Transverse colon (tissue), 4 donors: ENCODE measurements at regions of chr6 and their contacts with region 1.

Region 1: DNA sequence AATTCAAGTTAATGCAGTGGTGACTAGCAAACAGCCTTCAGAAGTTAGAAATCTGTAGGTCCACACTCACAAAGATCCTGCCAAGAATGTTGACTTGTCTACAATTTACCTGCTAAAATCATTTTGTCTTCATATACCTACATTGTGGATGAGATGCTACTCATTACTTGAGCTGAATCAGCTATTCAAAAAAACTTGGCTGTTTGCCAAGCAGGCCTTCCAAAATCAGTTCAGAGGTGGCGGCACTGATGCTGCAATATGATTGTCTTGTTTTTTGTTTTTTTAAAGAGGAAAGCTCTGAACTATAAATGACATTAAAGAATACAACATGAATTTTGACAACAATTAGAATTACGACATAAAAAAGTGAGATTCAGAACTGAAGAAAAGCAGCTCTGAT is 354.7 kb upstream of the KHDRBS2 start:
- DNase-seq: no peak
- H3K4me3 ChIP-seq: no peak overlapping the region
- H3K27ac ChIP-seq: no peak overlapping the region
- H3K4me1 ChIP-seq: no peaks in the 10 kb centered on the region
- H3K27me3 ChIP-seq: no peaks in the 10 kb centered on the region
- CTCF ChIP-seq: no peak
- EP300 ChIP-seq: no peak
- POLR2A ChIP-seq: no peak

Region 2: GRCh38 chr6:62652692-62653328 is 12.1 kb after region 1 on chr6:
- in situ Hi-C with region 1: no loop called
- intact Hi-C with region 1: loop called (anchors 1 kb)
- DNase-seq: no peak
- H3K4me3 ChIP-seq: no peak overlapping the region
- H3K27ac ChIP-seq: no peak overlapping the region
- H3K4me1 ChIP-seq: no peaks in the 10 kb centered on the region
- H3K27me3 ChIP-seq: no peaks in the 10 kb centered on the region
- CTCF ChIP-seq: no peak
- EP300 ChIP-seq: no peak
- POLR2A ChIP-seq: no peak